ENCODE measurements at regions of chr10 and their contacts with region 1.

Region 1: DNA sequence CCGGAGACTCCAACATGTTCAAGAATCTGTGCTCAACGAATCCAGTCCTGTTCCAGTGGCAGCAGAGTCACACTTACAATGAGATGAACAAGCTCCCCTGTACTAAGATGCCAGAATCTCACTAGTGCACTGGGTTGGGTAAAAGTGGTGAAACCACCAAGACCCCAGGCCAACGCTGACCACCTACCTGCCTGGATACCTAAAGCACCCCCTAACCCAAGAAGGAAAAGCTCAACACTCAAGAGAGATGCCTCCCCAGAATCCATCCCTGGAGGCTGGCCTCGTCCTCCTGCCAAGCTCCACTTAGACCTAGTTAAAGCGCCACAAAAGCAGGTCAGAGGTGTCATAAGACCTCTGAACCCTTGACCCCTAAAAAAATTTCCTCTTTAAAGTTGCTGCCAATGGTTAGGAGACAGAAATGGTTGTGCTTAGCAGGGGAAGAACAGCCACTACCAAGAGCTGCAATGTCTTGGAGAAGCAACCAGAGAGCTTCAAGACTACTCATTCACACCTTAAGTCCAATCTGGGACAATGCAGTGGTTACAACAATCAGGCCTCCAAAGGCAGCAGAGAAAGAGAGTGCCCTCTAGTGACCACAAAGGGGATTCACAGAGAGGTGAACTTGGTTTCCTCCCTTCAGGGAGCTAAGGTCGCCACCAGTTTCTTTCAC is 94.6 kb upstream of the MACROH2A2 start:
- DNase-seq: peak; percentile 33
- ATAC-seq: peak; percentile 81
- H3K4me3 ChIP-seq: no peak overlapping the region
- H3K27ac ChIP-seq: no peak overlapping the region
- H3K4me1 ChIP-seq: no peaks in the 10 kb centered on the region
- H3K27me3 ChIP-seq: no peaks in the 10 kb centered on the region
- CTCF ChIP-seq: peak; percentile 95

Region 2: GRCh38 chr10:69786791-69787190 is 171.2 kb before region 1 on chr10:
- CTCF ChIA-PET with region 1: interaction called, 14 read pairs
- POLR2A ChIA-PET with region 1: no interaction called
- in situ Hi-C with region 1: no loop called
- intact Hi-C with region 1: no loop called
- DNase-seq: no peak
- ATAC-seq: peak; percentile 77
- H3K4me3 ChIP-seq: no peak overlapping the region
- H3K27ac ChIP-seq: no peak overlapping the region
- H3K4me1 ChIP-seq: no peaks in the 10 kb centered on the region
- H3K27me3 ChIP-seq: peaks cover 4% of the 10 kb centered on the region
- CTCF ChIP-seq: peak; percentile 61

Region 3: DNA sequence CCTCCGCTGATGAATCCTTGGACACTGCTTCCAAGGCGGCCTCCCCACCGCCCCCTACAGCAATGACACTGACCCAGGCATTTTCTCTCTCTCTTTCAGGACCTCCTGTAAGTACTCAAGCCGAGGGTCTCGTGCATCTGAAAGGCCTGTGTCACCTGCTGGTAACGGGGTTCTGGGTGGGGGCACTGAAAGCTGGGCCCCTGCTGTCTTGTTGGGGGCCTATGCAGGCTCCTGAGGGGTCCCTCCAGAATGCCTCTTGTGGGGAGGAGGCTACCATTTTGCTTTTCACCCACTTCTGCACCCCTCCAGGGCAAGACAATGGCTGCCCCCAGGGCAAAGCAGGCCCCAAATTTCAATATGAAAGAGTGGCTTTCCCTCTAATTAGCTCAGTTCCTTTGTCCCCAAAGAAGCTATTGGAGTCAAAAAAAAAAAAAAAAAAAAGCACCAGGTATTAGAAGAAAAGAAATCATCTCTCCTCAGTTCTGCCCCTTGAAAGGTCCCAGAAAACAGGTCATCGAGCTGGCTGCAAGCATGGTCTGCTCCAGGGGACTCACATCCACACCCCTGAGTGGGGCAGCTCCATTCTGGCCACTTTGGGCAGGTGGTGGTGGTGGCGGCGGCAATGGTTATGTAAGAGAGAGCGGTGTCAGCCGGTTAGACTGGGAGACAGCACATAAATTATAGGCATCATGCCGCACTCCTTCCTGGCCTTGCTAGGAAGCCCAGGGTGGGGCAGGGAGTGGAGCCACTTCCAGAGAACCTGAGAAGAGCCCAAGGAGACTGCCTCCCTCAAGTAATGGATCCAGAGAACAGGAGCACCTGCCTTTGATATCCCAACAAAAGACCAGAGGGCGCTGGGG is 90.1 kb before region 1 on chr10:
- CTCF ChIA-PET with region 1: interaction called, 10 read pairs
- POLR2A ChIA-PET with region 1: no interaction called
- in situ Hi-C with region 1: no loop called
- intact Hi-C with region 1: no loop called
- DNase-seq: no peak
- ATAC-seq: no peak
- H3K4me3 ChIP-seq: no peak overlapping the region
- H3K27ac ChIP-seq: no peak overlapping the region
- H3K4me1 ChIP-seq: peaks cover 19% of the 10 kb centered on the region; the same call in 1 of the 2 replicates
- H3K27me3 ChIP-seq: no peaks in the 10 kb centered on the region
- CTCF ChIP-seq: no peak

Measured in Panc1 (cell line).